PC-3 (cell line): ENCODE measurements at regions of chr9 and their contacts with region 1.

Region 1: DNA sequence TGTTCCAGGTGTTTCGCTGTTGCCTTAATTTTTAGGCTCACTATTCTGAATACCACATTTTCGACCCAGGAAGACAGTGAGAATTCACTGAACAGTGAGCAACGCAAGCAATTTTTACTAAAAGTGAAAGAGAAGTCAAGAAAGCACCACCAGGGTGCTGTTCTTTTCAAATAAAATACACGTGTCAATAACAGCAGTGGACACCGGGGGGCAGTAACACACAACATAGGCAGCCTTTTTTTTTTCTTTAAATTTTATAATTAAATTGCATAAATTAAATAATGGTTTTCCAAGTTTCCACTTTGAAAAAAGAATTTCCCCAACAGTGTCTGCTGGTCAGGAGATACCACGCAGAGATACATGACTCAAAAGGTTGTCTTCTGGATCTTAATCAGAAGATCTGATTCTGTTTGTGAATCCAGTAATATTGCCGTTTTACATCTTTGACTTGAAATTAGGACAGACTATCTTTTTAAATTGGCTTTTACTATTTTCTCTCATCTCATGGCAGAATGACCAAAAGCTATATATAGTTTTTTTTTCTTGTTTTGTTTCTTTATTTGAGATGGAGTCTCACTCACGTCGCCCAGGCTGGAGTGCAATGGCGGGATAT is 47.1 kb upstream of the SH3GL2 start:
- DNase-seq: peak; percentile 60
- ATAC-seq: 0 out of 2 replicates have a peak, but pooled peaks have one; percentile 35
- H3K4me3 ChIP-seq: no peak overlapping the region
- H3K27ac ChIP-seq: no peak overlapping the region
- H3K4me1 ChIP-seq: no peaks in the 10 kb centered on the region
- H3K27me3 ChIP-seq: no peaks in the 10 kb centered on the region
- CTCF ChIP-seq: peak; percentile 61

Region 2: DNA sequence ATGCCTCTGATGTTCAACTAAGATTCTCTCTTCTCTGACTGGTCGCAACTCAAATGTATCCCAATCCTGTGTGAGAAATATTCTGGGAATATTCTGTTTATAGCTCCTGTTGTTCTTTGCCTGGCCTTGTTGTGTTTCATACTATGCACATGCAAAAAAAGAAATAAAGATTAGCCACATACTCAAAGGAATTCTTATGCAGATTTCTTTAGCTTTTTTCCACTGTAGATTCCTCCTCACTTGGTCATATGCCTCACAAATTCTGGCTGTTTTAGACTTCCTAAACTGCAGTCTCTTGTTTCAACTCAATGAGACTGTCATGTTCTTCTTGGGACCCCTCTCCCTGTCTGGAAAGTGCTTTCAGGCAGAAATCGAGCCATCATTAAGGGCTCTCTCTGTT is 170.4 kb before region 1 on chr9:
- CTCF ChIA-PET with region 1: no interaction called
- POLR2A ChIA-PET with region 1: no interaction called
- intact Hi-C with region 1: no loop called
- DNase-seq: no peak
- ATAC-seq: no peak
- H3K4me3 ChIP-seq: no peak overlapping the region
- H3K27ac ChIP-seq: no peak overlapping the region
- H3K4me1 ChIP-seq: no peaks in the 10 kb centered on the region
- H3K27me3 ChIP-seq: no peaks in the 10 kb centered on the region
- CTCF ChIP-seq: no peak

Region 3: GRCh38 chr9:17793713-17794622 is 262.2 kb after region 1 on chr9:
- CTCF ChIA-PET with region 1: interaction called, 3 read pairs
- POLR2A ChIA-PET with region 1: no interaction called
- intact Hi-C with region 1: loop called (anchors 2 kb)
- DNase-seq: peak; percentile 56
- ATAC-seq: peak; percentile 85
- H3K4me3 ChIP-seq: no peak overlapping the region
- H3K27ac ChIP-seq: no peak overlapping the region
- H3K4me1 ChIP-seq: no peaks in the 10 kb centered on the region
- H3K27me3 ChIP-seq: no peaks in the 10 kb centered on the region
- CTCF ChIP-seq: peak; percentile 66

Region 4: DNA sequence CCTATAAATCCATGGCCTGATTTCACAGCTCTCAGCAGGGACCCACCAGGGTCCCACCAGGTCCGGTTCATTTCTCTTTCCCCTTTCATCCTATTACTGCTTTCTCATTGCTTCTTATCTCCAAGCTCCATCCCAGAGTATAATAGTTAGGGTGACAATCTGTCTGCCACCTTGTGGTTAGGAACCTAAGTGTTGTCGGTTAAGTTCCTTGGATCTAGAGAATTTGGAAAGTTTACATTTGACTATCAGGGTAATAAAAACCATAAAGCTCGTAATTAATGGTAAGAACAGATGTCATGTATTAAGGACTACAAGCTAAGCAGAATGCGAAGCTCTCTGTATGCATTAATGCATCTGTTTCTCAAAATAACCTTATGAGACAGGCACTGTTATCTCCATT is 306.2 kb after region 1 on chr9:
- CTCF ChIA-PET with region 1: no interaction called
- POLR2A ChIA-PET with region 1: no interaction called
- intact Hi-C with region 1: loop called (anchors 1 kb)
- DNase-seq: peak; percentile 18
- ATAC-seq: no peak
- H3K4me3 ChIP-seq: no peak overlapping the region
- H3K27ac ChIP-seq: no peak overlapping the region
- H3K4me1 ChIP-seq: no peaks in the 10 kb centered on the region
- H3K27me3 ChIP-seq: peaks cover 6% of the 10 kb centered on the region; the same call in 1 of the 2 replicates
- CTCF ChIP-seq: peak; percentile 46

Region 5: DNA sequence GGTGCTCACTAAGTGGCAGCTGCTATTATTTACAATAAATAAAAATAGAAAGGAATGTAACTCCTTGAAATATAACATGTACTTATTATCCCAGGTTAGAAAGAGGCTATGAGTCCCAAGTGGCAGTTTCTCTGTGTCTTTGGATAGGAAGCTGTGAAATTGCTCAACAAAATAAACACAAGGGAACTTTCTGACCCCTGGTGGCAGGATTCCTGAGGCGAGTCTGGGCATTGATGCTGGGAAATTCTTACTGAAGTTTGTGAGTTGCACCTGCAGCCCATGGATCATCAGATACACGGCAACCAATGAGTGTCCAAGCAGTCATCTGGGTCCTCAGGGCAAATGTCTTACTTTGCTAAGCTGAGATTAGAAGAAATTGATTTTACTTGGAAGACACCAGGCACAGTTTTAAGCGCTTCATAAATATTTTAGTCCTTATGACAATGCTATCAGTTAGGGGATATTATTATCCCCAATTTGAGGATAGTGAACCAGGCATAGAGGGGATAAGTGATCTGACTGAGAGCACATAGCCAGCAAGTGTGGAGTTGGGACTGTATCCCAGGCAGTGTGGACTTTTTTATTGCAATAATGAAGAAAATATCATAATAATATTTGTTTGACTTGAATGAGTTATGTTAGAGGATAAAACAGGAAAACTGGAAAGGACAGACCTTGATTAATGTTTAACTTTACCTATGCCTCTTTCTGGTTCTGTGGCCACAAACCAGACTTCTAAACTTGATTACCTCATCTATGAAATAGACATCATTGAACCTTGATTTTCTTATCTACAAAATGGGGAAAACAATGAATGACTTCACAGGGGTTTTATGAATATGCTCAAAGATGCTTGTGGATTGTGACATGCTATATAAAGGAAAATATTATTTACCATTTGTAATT is 676.7 kb after region 1 on chr9:
- CTCF ChIA-PET with region 1: no interaction called
- POLR2A ChIA-PET with region 1: no interaction called
- intact Hi-C with region 1: loop called (anchors 10 kb)
- DNase-seq: peak; percentile 77
- ATAC-seq: peak; percentile 69
- H3K4me3 ChIP-seq: no peak overlapping the region
- H3K27ac ChIP-seq: no peak overlapping the region
- H3K4me1 ChIP-seq: peaks cover 4% of the 10 kb centered on the region; the same call in 1 of the 2 replicates
- H3K27me3 ChIP-seq: no peaks in the 10 kb centered on the region
- CTCF ChIP-seq: peak; percentile 71

Region 6: DNA sequence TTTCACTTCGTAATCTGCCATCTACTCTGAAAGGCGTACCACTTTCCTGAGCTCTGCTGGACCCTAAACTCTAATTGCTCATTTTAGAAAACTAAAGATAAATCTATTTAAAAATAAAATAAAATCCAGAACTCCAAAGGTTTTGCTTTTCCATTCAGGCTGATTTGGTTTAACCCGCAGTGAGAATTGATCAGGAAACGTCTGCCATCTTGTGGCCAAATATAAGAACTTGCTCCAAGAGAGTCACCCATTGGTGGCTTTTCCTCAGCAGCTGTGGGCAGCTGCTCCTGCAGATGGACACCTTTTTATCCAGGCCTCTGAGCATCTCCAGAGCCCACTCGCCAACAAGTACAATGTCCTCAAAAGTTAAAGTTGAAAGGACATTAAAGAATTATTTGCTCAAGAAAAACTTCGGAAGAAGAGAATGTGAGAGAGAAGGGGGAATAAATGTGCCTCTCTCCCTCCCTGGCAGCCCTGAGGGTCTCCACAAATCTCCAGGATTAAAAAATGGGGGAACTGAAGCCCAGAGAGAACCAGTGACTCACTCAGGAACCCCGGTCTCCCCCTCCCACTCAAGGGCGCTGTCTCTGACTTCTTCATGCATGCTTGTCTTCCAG is 1497.2 kb after region 1 on chr9:
- CTCF ChIA-PET with region 1: no interaction called
- POLR2A ChIA-PET with region 1: no interaction called
- intact Hi-C with region 1: loop called (anchors 5 kb)
- DNase-seq: peak; percentile 69
- ATAC-seq: peak; percentile 71
- H3K4me3 ChIP-seq: no peak overlapping the region
- H3K27ac ChIP-seq: no peak overlapping the region
- H3K4me1 ChIP-seq: no peaks in the 10 kb centered on the region
- H3K27me3 ChIP-seq: no peaks in the 10 kb centered on the region
- CTCF ChIP-seq: peak; percentile 70